Uterus (tissue), 4 donors: ENCODE measurements at regions of chr18 and their contacts with region 1.

Region 1: GRCh38 chr18:62584241-62585120 is 61.7 kb downstream of the ZCCHC2 start:
- DNase-seq: peak; percentile 89
- H3K4me3 ChIP-seq: no peak overlapping the region
- H3K27ac ChIP-seq: peak overlapping the region; percentile 48 to 64
- H3K4me1 ChIP-seq: no peaks in the 10 kb centered on the region
- H3K27me3 ChIP-seq: no peaks in the 10 kb centered on the region
- CTCF ChIP-seq: peak; percentile 92 to 98 (median 96)
- POLR2A ChIP-seq: no peak

Region 2: GRCh38 chr18:62522504-62523254 is 61.8 kb before region 1 on chr18 and contains the start of gene ZCCHC2:
- intact Hi-C with region 1: no loop called
- DNase-seq: peak; percentile 97 to 99
- H3K4me3 ChIP-seq: peak within 1 kb of the TSS; percentile 83 to 98
- H3K27ac ChIP-seq: peak within 1 kb of the TSS; percentile 96 to 98
- H3K4me1 ChIP-seq: peaks cover 0 to 5% of the 10 kb centered on the region in 2 donors
- H3K27me3 ChIP-seq: no peaks in the 10 kb centered on the region
- CTCF ChIP-seq: peak in 1 of 4 experiments; percentile 7
- POLR2A ChIP-seq: peak; percentile 84 to 96
- total RNA-seq, gene ZCCHC2: 7.4 to 44.8 (median 15.5) TPM

Region 3: GRCh38 chr18:62702253-62702652 is 117.8 kb after region 1 on chr18:
- intact Hi-C with region 1: loop called (anchors 10 kb)
- DNase-seq: no peak
- H3K4me3 ChIP-seq: no peak overlapping the region
- H3K27ac ChIP-seq: no peak overlapping the region
- H3K4me1 ChIP-seq: no peaks in the 10 kb centered on the region
- H3K27me3 ChIP-seq: no peaks in the 10 kb centered on the region
- CTCF ChIP-seq: no peak
- POLR2A ChIP-seq: no peak

Region 4: DNA sequence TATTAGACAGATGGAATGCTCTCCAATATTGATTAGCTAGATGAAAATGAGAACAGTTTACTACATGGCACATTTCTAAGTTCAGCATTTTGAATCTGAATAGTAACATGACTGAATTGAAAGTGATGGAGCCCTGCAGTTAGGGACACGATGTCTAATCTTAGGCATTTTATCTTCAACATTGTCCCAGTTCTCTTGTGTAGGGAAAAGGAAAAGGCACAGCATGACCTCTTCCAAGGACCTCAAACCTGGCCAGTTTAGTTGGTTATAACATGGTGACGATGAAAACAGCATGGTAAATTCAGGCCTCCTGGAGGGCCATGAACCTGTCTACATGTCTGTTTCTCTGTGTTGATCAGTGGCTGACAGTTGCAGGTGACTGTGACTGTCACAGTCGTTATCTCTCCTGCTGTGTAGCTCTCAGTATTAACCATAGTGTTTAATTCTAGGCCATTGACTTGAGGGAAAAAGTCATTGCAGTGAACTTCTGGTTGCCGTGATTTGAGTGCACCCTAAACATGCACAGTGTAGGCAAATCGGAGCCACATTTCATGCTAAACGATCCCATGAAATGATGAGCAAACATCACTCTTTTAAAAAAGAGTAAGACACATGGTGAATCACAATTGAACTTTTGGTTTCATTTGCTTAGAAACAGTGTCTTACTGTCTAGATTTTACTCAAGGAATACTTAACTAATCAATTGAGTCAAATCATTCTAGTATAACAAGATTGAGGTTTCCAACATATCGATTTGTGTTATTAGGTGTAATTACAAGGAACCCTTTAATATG is 260.6 kb after region 1 on chr18:
- intact Hi-C with region 1: no loop called
- DNase-seq: no peak
- H3K4me3 ChIP-seq: no peak overlapping the region
- H3K27ac ChIP-seq: no peak overlapping the region
- H3K4me1 ChIP-seq: no peaks in the 10 kb centered on the region
- H3K27me3 ChIP-seq: no peaks in the 10 kb centered on the region
- CTCF ChIP-seq: no peak
- POLR2A ChIP-seq: no peak

Region 5: DNA sequence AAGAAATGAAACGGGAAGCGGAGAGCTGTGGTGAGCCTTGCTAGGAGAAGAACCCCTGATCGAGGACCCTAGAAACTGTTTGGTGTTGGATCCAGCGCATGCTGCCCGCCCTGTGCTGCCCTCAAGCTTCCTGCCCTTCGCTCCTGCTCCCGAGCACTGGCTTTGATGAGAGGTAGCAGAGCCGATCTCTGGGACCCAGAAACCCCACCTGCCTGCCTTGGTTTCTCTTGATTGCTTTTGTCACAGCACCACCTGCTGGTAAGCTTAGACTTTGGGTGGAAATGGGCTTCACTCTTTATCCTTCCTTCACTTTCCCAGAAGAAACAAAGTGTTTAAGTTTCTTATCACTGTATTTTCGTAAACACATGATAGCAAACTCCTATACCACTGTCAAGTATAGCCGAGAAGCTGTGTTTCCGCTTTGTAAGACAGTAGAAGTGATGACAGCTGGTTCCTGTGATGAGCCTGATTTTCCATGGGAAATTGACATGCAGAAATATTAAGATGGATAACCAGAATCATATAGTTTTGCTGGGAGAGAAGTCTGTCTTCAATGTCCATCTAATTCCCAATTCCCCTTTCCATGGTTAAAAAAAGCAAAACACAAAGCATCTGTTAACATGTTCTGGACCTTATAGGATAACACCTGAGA is 398.2 kb after region 1 on chr18:
- intact Hi-C with region 1: loop called (anchors 5 kb)
- DNase-seq: peak; percentile 59 to 75
- H3K4me3 ChIP-seq: peak overlapping the region in 1 of 2 donors; percentile 27
- H3K27ac ChIP-seq: peak overlapping the region in 1 of 2 donors; percentile 33
- H3K4me1 ChIP-seq: no peaks in the 10 kb centered on the region
- H3K27me3 ChIP-seq: no peaks in the 10 kb centered on the region
- CTCF ChIP-seq: peak; percentile 74 to 85 (median 80)
- POLR2A ChIP-seq: no peak